PC-9 (cell line): ENCODE measurements at regions of chr17 and their contacts with region 1.

Region 1: GRCh38 chr17:43125133-43125966 is at the start of gene BRCA1:
- DNase-seq: peak; percentile 91 to 100
- H3K4me3 ChIP-seq: peak within 1 kb of the TSS; percentile 87
- H3K27ac ChIP-seq: peak within 1 kb of the TSS; percentile 98
- H3K4me1 ChIP-seq: no peaks in the 10 kb centered on the region; the same call in none of the 2 replicates
- H3K27me3 ChIP-seq: no peaks in the 10 kb centered on the region
- CTCF ChIP-seq: no peak
- total RNA-seq, gene BRCA1: 40.9 and 52.0 TPM in 2 replicates

Region 2: DNA sequence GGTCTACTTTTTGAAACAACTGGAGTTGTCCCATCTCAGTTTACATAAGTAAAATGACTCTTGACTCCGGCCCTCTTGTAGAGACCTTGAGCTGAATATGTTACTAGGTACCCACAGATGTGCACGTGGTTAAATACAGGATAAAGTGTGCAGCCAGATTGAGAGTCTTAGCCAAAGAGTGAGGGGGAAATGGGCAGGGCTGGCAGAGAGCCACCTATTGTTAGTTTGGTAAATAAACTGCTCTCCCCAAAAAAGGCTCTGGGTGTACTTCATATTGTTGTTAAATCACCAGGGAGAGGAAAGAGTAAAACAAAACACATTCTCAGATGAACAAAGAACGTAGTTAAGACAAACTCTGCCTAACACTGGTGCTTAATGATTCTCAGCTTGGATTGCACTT is 204.4 kb before region 1 on chr17:
- CTCF ChIA-PET with region 1: no interaction called
- POLR2A ChIA-PET with region 1: interaction called, 13 read pairs
- intact Hi-C with region 1: no loop called
- DNase-seq: no peak
- H3K4me3 ChIP-seq: no peak overlapping the region
- H3K27ac ChIP-seq: no peak overlapping the region
- H3K4me1 ChIP-seq: no peaks in the 10 kb centered on the region
- H3K27me3 ChIP-seq: no peaks in the 10 kb centered on the region
- CTCF ChIP-seq: no peak

Region 3: GRCh38 chr17:43068570-43069367 is 56.6 kb before region 1 on chr17:
- CTCF ChIA-PET with region 1: no interaction called
- POLR2A ChIA-PET with region 1: interaction called, 11 read pairs
- intact Hi-C with region 1: no loop called
- DNase-seq: no peak
- H3K4me3 ChIP-seq: no peak overlapping the region
- H3K27ac ChIP-seq: peak overlapping the region; percentile 1; the same call in 1 of the 2 replicates
- H3K4me1 ChIP-seq: no peaks in the 10 kb centered on the region
- H3K27me3 ChIP-seq: no peaks in the 10 kb centered on the region
- CTCF ChIP-seq: no peak

Region 4: GRCh38 chr17:43170766-43171585 is 45.6 kb after region 1 on chr17 and contains the start of gene NBR1:
- CTCF ChIA-PET with region 1: no interaction called
- POLR2A ChIA-PET with region 1: interaction called, 4 read pairs
- intact Hi-C with region 1: loop called (anchors 1 kb)
- DNase-seq: peak; percentile 93
- H3K4me3 ChIP-seq: peak within 1 kb of the TSS; percentile 71
- H3K27ac ChIP-seq: peak within 1 kb of the TSS; percentile 95
- H3K4me1 ChIP-seq: peaks cover 14% of the 10 kb centered on the region
- H3K27me3 ChIP-seq: no peaks in the 10 kb centered on the region
- CTCF ChIP-seq: no peak
- total RNA-seq, gene NBR1: 80.5 and 93.7 TPM in 2 replicates